ENCODE measurements at regions of chrX and their contacts with region 1.

Region 1: DNA sequence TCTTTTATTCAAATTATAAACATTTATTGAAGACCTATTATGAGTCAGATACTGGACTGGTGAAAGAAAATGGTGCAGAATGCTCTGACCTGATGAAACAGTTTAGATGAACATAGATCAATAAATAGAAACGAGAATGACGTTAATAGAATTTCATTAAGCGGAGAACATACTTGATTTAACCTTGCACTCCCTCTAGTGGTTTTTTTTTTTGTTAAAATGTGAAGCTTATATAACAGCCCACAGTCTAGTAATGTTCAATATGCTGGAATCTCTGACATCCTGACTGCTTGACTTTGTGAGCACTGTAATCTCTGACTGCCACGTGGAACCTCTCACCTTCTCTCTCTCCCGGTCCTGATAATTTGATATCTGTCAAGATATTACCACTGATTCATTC is 32.3 kb downstream of the HDAC8 start:
- DNase-seq: no peak
- ATAC-seq: peak; percentile 68

Region 2: GRCh38 chrX:72297953-72298730 is 242.2 kb before region 1 on chrX:
- intact Hi-C with region 1: loop called (anchors 10 kb)
- DNase-seq: no peak
- ATAC-seq: no peak

Region 3: DNA sequence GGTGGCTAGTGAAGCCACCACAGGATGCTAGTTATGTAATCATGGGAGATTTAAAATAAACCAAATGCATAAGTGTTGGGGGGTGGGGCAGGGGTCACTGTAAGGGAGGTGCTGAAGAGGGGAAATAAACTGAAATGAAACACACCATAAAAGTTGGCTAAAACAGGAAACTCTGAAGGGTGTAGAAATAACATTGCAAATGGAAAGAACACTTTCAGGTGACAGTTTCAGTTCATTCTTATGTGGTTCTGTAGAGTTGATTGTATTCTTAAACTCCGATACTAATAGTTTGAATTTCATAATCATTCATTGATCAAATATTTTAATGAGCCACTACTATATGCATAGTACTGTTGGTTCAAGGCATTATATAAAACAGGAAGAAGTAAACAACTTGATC is 47.8 kb before region 1 on chrX:
- intact Hi-C with region 1: no loop called
- DNase-seq: no peak
- ATAC-seq: no peak

Measured in Right ventricle myocardium superior (tissue), 1 donor.